ENCODE measurements at regions of chr6 and their contacts with region 1.

Region 1: DNA sequence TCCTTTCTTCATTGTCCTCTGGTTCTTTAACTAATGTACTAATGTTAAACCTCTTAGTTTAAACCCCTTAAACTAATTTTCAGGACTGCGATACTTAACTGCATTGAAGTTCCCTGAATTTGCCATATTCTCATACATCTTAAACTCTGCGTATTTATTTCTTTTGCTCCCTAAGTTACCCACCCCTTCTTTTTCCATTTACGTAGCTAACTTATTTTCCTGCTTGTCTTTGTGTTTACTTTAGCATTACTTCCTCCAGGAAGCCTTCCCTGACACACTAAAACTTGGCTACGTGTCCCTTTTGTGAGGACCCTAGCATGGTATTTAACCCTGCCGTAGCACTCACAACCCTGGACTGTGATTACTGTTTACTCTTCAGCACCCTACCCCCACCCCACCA is 79.0 kb downstream of the UBR2 start:
- DNase-seq: no peak
- ATAC-seq: no peak
- H3K4me3 ChIP-seq: no peak overlapping the region
- H3K27ac ChIP-seq: no peak overlapping the region
- H3K4me1 ChIP-seq: no peaks in the 10 kb centered on the region
- H3K27me3 ChIP-seq: no peaks in the 10 kb centered on the region
- CTCF ChIP-seq: no peak

Region 2: DNA sequence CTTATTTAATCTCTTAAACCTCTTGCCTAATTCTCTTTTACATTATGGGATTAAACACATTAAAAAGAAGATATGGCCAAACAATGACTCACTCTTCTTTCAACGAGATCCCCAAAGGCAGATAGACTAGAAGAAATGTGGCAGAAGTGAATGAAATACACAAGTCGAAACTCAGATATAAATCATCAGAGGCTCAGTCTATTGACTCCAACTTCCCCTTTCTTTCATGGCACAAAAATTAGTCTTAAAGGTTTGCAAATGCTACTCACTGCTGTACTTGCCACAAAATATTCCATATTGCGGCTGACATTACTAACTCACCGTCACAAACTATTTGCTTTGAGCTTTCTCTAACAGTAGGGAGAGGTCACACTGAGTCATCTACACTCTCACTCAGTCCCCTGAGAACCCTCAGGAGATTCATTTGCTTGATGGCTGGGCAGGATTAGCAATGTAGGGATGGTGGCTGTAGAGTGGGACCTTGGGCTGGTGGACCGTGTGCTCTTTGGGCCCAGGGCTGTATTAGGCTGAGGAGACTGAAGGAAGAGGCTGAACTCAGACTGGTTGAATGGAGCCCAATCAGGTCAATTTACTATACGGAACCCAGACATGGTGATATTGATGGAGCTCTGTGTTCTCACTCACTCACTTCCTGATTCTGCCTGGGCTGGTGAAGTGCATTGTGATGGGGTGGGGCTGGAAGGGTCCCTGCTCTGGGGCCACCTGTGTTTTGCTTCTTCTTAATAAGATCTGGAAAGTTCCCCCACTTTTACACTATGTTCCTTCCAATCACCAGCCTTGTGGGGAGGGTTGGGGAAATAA is 121.8 kb before region 1 on chr6:
- intact Hi-C with region 1: no loop called
- DNase-seq: no peak
- ATAC-seq: no peak
- H3K4me3 ChIP-seq: no peak overlapping the region
- H3K27ac ChIP-seq: no peak overlapping the region
- H3K4me1 ChIP-seq: no peaks in the 10 kb centered on the region
- H3K27me3 ChIP-seq: no peaks in the 10 kb centered on the region
- CTCF ChIP-seq: no peak

Region 3: GRCh38 chr6:42688281-42688680 is 45.5 kb after region 1 on chr6:
- intact Hi-C with region 1: no loop called
- DNase-seq: no peak
- ATAC-seq: no peak
- H3K4me3 ChIP-seq: no peak overlapping the region
- H3K27ac ChIP-seq: peak overlapping the region; percentile 81
- H3K4me1 ChIP-seq: peaks cover 39% of the 10 kb centered on the region
- H3K27me3 ChIP-seq: no peaks in the 10 kb centered on the region
- CTCF ChIP-seq: no peak

Region 4: DNA sequence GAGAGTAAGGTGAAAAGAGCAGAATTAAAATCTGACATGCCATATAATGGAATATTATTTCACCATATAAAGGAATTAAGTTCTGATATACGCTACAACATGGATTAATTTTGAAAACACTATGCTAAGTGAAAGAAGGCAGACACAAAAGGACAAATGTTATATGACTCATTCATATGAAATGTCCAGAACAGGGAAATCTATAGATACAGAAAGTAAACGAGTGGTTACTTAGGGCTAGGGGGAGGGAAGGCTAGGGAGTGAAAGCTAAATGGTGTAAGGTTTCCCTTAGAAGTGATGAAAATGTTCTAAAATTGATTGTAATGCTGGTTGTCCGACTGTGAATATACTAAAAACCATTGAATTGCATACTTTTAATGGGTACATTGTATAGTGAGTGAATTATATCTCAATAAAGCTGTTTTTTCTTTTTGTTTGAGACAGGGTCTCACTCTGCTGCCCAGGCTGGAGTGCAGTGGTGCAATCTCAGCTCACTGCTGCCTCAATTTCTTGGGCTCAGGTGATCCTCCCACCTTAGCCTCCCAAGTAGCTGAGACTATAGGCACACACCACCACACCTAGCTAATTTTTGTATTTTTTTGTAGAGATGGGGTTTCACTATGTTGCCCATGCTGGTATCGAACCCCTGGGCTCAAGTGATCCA is 71.4 kb after region 1 on chr6:
- intact Hi-C with region 1: no loop called
- DNase-seq: no peak
- ATAC-seq: no peak
- H3K4me3 ChIP-seq: no peak overlapping the region
- H3K27ac ChIP-seq: no peak overlapping the region
- H3K4me1 ChIP-seq: no peaks in the 10 kb centered on the region
- H3K27me3 ChIP-seq: no peaks in the 10 kb centered on the region
- CTCF ChIP-seq: no peak

Region 5: DNA sequence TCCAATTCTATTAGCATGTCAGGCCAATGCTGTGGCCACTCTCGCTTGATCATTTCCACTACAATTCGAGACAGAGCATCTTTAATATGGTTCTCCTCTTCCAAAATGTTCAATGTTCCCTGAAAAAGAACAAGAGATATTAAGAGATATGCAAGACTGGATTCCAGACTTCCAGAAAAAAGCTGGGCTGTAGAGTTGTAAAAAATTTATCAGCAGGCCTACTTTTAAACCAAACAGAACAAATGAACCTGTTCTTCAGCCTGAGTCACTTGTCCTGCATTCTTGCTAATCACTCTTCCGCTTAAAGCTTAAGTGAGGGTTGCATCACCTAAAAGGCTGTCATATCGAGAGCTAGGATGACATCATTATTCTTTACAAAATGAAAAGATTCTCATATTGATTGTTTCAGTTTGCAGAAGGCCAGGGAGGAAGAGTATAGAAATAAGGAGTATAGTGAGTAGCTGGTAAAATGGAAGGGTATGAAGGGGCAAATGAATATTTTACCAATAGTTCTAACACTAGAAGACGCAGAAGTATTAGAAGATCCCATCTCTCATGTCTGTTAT is 928.2 kb after region 1 on chr6:
- intact Hi-C with region 1: loop called in 1 of 2 experiments (anchors 10 kb)
- DNase-seq: no peak
- ATAC-seq: no peak
- H3K4me3 ChIP-seq: no peak overlapping the region
- H3K27ac ChIP-seq: no peak overlapping the region
- H3K4me1 ChIP-seq: peaks cover 7% of the 10 kb centered on the region
- H3K27me3 ChIP-seq: no peaks in the 10 kb centered on the region
- CTCF ChIP-seq: no peak